GM10248 (cell line): ENCODE measurements at regions of chr14 and their contacts with region 1.

Region 1: GRCh38 chr14:24431569-24432258 is 2.0 kb downstream of the KHNYN start:
- DNase-seq: peak; percentile 90
- CTCF ChIP-seq: peak; percentile 96

Region 2: DNA sequence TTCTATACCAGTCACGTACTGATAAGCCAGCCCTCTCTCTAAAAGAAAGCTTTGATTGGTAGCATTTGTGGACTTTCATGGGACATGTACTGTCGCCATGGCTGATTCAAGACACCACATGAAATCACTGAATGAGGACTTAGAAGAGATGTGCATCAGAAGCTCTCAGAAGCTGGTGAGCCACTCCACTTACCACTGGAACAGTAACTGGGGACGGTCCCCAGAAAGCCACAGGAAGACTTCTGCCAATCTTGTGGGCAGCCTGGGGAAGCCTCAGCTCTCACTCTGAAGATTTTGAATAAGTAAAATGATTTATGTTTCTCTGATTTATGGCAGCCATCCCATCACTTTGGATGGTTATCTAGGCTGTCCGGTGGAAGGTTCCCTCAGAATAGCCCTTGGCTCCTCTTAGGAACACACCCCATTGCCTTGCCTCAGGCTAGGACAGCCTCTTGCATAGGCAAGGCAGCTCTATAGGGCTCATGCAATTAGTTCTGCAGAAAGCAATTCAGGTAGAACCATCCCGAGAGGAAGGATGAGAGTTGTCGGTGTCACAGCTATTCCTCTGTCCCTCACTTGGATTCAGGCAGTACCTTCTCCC is 142.0 kb before region 1 on chr14:
- CTCF ChIA-PET with region 1: interaction called, 11 read pairs
- POLR2A ChIA-PET with region 1: no interaction called
- DNase-seq: peak; percentile 58
- CTCF ChIP-seq: no peak

Region 3: GRCh38 chr14:24315807-24316603 is 115.7 kb before region 1 on chr14:
- CTCF ChIA-PET with region 1: interaction called, 629 read pairs
- POLR2A ChIA-PET with region 1: interaction called, 8 read pairs
- DNase-seq: no peak
- CTCF ChIP-seq: no peak

Region 4: GRCh38 chr14:24351517-24351916 is 80.2 kb before region 1 on chr14:
- CTCF ChIA-PET with region 1: interaction called, 23 read pairs
- POLR2A ChIA-PET with region 1: no interaction called
- DNase-seq: no peak
- CTCF ChIP-seq: no peak

Region 5: DNA sequence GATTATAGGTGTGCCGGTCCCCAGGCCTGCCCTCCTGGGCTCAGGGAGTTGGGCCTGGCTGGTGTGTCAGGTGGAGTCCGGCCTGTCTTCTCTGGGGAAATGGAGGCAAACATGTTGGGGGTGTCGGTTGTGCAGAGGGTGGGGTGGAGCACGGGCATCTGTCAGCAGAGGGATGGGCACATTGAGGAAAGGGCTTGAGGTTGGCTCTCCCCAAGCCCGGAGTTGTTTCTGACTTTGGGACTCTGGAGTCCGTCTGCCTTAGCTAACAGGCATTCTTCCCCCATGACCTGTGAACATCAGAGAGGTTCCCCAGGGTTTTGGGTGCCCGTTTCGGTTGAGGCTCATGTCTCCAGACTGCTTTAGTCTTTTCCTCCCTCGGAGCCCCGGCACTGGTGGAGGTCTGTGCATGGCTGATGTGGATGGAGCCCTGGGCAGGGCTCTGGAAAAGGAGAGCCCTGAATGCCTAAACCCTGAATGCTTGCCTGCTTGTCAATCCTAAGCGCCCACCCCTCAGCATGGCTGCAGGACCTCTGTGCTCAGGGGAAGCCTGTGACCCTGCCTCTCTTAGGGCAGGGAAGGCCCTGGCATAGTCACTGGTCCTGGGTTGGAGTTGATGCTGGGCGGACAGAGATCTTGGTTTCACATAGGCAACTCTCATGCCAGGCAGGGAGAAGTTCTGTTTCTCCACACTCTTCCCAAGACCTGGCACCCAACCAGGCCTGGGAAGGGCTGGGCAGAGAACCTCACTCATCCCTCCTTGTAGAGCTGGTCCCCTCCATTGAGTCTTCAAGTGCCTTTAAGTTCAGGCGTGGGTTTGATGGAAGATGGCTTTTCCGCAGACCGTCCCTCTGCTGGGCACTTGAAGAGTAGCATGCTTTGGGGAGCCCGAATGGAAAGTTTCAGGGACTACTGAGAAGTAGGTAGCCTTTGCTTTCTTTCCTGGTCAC is 20.0 kb before region 1 on chr14:
- CTCF ChIA-PET with region 1: interaction called, 33 read pairs
- POLR2A ChIA-PET with region 1: interaction called, 3 read pairs
- DNase-seq: peak; percentile 70
- CTCF ChIP-seq: peak; percentile 55

Region 6: DNA sequence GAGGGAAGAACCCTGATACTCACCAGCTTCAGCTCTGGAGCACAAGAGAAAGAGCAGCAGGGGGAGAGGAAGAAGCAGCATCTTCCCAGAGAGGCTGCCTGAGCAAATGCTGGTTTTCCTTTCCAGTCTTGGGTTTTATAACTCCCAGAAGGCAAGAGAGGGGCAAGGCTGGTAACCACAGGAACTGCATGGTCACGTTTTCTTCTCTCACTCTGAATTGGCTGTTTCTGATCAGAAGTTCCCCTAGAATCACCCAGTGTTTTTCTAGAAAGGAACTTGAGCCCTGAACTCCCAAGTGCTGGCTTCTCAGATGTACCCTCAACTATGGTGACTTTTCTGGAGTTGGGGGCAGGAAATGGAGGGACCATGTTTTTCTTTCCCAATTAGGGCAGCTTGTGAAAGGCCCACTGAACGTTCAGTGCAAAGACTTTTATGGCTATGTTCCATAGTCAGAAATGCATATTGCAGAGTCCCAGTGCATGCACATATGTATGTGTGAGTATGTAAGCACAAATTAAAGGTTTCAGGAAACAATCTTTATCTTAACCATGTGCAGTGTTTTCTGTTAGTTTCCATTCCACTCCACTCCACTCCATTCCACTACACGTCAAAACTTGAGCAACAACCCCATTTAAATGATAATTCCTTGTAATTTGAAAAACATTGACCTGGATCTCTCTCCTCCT is 76.6 kb after region 1 on chr14 and contains the start of gene CMA1:
- CTCF ChIA-PET with region 1: no interaction called
- POLR2A ChIA-PET with region 1: no interaction called
- DNase-seq: no peak
- CTCF ChIP-seq: no peak

Region 7: GRCh38 chr14:24744641-24745040 is 312.9 kb after region 1 on chr14:
- CTCF ChIA-PET with region 1: no interaction called
- POLR2A ChIA-PET with region 1: no interaction called
- DNase-seq: no peak
- CTCF ChIP-seq: no peak